AG04450 (cell line): ENCODE measurements at regions of chr6 and their contacts with region 1.

Region 1: DNA sequence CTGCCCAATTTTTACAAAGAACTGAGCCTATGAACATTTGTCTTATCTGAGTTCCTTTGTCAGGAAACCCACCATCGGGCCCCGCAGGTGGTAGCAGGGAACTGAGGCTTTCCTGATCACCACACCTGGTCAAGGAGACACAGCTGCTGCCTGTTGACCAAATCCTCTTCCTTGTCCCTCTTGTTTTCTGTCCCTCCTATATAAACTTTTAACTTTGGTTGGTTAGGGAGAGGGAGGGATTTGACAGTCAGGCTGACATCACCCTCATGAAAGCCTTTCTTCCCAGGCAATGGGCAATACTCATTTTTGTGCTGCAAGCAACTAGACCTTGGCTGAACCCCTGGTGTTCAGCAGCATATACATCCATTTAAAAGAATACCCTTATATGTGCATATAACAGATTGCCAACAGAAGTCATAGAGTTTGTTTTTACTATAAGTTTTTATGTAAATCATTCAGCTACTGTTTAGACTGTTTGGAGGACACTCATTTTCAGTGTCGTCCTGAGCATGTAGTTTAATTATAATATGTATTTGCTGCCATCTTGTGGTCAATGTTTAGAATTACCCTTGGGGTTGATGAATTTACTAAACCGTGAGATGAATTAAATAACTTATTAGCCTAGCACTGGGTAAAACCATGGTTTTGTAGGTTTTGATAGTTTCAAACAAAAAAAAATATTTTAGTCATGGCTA is 17.0 kb downstream of the CRISP1 start:
- DNase-seq: peak; percentile 18
- H3K4me3 ChIP-seq: no peak overlapping the region
- H3K27ac ChIP-seq: no peak overlapping the region
- H3K27me3 ChIP-seq: no peaks in the 10 kb centered on the region
- CTCF ChIP-seq: peak; percentile 53

Region 2: GRCh38 chr6:49618257-49618656 is 231.1 kb before region 1 on chr6:
- CTCF ChIA-PET with region 1: interaction called, 59 read pairs
- POLR2A ChIA-PET with region 1: no interaction called
- DNase-seq: no peak
- H3K4me3 ChIP-seq: no peak overlapping the region
- H3K27ac ChIP-seq: no peak overlapping the region
- H3K27me3 ChIP-seq: no peaks in the 10 kb centered on the region
- CTCF ChIP-seq: no peak

Region 3: DNA sequence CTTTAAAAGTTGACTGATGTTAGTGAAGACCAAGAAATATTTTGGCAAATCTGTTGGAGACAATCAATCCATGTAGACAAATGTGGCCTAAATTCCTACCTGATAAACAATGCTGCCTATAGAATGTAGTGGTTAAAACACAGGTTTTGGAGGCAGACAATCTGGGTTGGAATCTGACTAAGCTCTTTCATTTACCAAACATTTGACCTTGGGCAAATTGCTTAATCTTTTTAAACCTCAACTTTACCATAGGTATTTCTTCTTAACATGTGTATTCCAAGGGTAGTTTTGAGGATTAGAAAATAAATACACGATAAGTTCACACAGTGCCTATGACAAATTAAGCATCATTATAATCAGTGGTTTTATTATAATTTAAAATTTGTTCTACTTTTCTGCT is 224.2 kb before region 1 on chr6:
- CTCF ChIA-PET with region 1: interaction called, 59 read pairs
- POLR2A ChIA-PET with region 1: no interaction called
- DNase-seq: no peak
- H3K4me3 ChIP-seq: no peak overlapping the region
- H3K27ac ChIP-seq: no peak overlapping the region
- H3K27me3 ChIP-seq: no peaks in the 10 kb centered on the region
- CTCF ChIP-seq: no peak